Activated B cell treated with CpG ODN at 0.5 μM for 24 hours (primary cell): ENCODE measurements at regions of chr15 and their contacts with region 1.

Region 1: DNA sequence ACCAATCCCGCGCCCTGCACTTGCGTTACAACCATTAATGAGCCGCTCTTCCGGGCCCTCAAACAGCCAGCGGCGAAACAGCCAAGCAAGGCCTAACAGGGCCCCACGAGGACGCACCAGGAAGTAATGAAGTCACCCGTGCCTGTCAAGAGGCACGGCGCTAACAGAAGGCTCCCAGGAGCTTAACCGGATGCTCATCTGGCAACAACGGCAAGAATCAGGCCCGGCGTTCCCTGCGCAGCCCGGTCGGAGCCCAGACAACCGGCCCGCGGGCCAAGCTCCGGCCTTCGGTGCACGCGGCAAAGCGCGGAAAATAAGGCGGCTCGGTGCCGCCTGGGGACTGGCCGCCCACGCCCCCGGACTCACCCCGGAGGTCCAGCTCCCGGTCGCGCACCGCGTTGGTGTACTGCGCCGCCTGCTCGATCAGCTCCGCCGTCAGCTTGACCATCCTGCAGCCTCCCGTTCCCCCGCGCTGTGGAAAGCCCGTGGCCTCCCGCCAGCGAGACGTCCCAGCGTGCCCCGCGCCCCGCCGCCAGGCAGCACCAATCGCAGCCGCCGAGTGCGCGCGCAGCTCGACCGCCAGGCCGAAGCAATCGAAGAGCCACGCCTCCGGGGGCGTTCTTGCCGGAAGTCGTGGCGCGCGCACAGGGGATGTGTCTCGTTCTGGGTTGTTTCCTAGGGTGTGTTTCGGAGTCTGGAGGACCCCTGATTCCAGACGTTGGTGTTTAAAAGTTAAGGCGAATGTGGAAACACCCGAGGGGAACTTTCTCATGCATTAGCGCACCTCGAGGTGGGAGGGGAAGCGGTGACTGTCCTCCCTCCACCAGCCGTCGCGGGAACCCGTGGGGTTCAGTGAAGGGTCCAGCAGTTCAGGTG is at the start of gene SNRPA1:
- DNase-seq: peak; percentile 99
- ATAC-seq: peak; percentile 83
- H3K4me3 Mint-ChIP-seq: peak within 1 kb of the TSS; percentile 97
- H3K27ac Mint-ChIP-seq: peak within 1 kb of the TSS; percentile 95
- H3K4me1 Mint-ChIP-seq: peaks cover 45% of the 10 kb centered on the region
- H3K27me3 Mint-ChIP-seq: no peaks in the 10 kb centered on the region
- CTCF ChIP-seq: no peak
- total RNA-seq, gene SNRPA1: 119 and 122 TPM in 2 replicates

Region 2: DNA sequence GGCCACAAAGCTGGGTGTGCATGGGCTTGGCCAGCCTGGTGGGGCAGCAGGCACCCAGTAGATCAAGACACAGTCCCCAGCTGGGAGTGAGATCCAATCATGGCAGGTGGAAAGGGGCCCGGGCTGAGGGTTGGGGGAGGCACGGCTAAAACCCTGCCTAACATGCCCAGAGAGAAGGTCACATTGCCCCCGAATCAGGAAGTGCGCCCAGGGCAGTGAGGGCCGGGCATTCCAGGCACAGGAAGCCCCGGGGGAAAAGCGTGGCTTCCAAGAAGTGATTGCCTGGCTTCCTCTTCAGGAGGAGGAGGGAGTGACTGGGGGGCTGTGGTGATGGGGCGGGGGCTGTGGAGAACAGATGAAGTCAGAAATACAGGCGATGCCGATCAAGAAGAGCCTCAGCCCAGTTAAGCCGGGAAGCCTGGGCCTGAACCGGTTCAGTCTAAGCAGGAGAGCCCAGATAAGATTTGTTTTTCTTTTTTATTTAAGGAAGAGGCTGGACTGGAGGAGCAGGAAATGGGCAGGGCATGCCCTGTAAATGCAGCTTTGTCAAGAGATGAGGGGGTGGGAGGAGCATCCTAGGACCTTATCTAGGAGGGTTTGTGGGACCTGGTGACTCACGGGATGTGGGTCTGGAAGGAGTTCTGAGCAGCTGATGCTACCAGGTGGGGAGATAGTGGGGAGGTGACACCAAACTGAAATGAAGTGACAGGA is 127.1 kb before region 1 on chr15:
- CTCF ChIA-PET with region 1: no interaction called
- POLR2A ChIA-PET with region 1: no interaction called
- intact Hi-C with region 1: no loop called
- DNase-seq: no peak
- ATAC-seq: peak; percentile 52
- H3K4me3 Mint-ChIP-seq: peak overlapping the region; percentile 69
- H3K27ac Mint-ChIP-seq: peak overlapping the region; percentile 20
- H3K4me1 Mint-ChIP-seq: peaks cover 14% of the 10 kb centered on the region
- H3K27me3 Mint-ChIP-seq: no peaks in the 10 kb centered on the region
- CTCF ChIP-seq: no peak

Region 3: GRCh38 chr15:101277038-101277882 is 17.7 kb before region 1 on chr15 and contains the start of gene SELENOS:
- CTCF ChIA-PET with region 1: interaction called, 3 read pairs
- POLR2A ChIA-PET with region 1: interaction called, 9 read pairs
- intact Hi-C with region 1: loop called (anchors 1 kb)
- DNase-seq: peak; percentile 91
- ATAC-seq: peak; percentile 97
- H3K4me3 Mint-ChIP-seq: peak within 1 kb of the TSS; percentile 90
- H3K27ac Mint-ChIP-seq: peak within 1 kb of the TSS; percentile 70
- H3K4me1 Mint-ChIP-seq: peaks cover 14% of the 10 kb centered on the region
- H3K27me3 Mint-ChIP-seq: no peaks in the 10 kb centered on the region
- CTCF ChIP-seq: no peak
- total RNA-seq, gene SELENOS: 23.7 and 24.5 TPM in 2 replicates

Region 4: DNA sequence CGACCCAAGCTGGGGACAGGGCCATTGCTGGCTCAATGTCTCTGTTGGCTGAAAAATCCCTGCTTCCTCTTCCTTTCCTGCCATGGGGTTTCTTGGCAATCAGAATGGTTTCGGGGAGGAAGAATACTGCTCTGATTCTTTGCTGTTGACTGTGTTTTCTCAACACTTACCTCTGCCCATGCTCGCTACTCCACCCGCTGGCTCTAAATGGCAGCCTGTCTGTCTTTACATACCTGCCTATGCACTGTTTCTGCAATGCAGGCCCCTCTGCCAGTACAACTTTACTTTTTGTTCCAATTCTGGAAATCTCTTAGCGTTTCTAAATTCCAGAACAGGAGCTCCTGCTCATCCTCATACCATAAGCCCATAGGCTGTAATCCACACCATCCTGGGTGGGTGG is 38.4 kb after region 1 on chr15:
- CTCF ChIA-PET with region 1: no interaction called
- POLR2A ChIA-PET with region 1: no interaction called
- intact Hi-C with region 1: loop called (anchors 2 kb)
- DNase-seq: no peak
- ATAC-seq: no peak
- H3K4me3 Mint-ChIP-seq: no peak overlapping the region
- H3K27ac Mint-ChIP-seq: no peak overlapping the region
- H3K4me1 Mint-ChIP-seq: peaks cover 10% of the 10 kb centered on the region
- H3K27me3 Mint-ChIP-seq: peaks cover 7% of the 10 kb centered on the region
- CTCF ChIP-seq: no peak

Region 5: DNA sequence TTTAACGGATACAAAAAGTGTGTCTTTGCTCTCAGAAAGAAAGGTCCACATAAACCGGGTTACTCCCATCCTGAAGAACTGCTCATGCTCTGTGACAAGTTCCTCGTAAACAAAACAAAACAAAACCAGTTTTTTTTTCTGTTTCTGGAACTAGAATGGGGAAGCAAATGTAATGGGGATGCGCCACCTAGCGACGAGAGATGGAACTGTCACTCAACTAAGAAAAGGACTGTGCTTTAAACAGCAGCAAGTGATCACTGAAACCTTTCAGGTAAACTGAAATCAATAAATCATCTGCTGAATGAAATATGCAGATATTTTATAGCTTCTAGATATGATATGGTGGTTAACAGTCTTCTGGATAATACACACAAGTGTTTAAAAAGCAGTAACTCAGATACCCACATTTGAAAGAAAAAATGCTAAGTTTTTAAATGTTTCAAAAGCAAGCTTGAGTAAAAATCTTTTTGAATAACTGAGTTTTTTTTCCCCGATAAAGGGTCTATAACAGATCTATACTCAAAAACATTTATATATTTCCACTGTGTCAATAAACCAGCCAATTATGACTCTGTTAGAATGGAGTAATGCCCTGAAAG is 346.3 kb after region 1 on chr15:
- CTCF ChIA-PET with region 1: interaction called, 42 read pairs
- POLR2A ChIA-PET with region 1: interaction called, 25 read pairs
- intact Hi-C with region 1: loop called (anchors 1 kb)
- DNase-seq: peak; percentile 55
- ATAC-seq: peak; percentile 56
- H3K4me3 Mint-ChIP-seq: no peak overlapping the region
- H3K27ac Mint-ChIP-seq: peak overlapping the region; percentile 76
- H3K4me1 Mint-ChIP-seq: peaks cover 23% of the 10 kb centered on the region
- H3K27me3 Mint-ChIP-seq: no peaks in the 10 kb centered on the region
- CTCF ChIP-seq: peak; percentile 39

Region 6: DNA sequence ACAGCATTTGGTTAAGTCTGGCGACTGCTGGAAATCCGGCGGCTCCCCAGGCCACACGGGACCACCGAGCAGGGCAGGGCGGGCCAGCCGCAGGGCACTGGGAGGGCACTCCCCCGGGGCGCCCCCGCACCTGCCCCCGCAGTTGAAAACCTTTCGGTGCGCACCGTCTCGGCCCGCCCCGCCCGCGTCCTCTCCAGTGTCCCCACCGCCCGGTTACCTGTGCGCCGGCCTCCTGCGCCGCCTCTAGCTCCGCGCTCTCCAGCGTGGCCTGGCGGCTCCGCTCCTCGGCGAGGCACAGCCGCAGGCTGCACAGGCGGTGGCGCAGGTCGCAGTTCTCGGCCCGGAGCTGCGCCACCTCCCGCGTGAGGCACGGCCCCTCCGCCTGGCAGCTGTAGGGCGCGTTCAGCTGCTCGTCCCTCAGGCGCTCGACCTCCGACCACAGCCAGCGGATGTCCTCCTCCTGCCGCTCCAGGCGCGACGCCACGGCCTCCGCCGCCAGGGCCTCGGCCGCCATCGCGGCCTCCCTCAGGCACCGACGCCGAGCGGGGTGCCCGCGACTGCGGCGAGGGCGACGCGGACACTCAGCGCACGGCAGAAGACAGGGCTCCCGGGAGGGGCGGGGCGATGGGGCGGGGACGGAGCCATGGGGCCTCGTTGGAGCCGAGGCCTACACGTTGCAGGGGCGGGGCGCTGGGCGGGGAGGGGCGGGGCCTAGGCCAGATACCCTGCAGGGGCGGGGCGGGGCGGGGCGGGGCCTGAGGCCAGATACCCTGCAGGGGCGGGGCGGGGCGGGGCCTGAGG is 429.1 kb after region 1 on chr15 and contains the start of gene TARS3:
- CTCF ChIA-PET with region 1: no interaction called
- POLR2A ChIA-PET with region 1: interaction called, 7 read pairs
- intact Hi-C with region 1: loop called (anchors 1 kb)
- DNase-seq: peak; percentile 83
- ATAC-seq: peak; percentile 89
- H3K4me3 Mint-ChIP-seq: peak within 1 kb of the TSS; percentile 82
- H3K27ac Mint-ChIP-seq: peak within 1 kb of the TSS; percentile 85
- H3K4me1 Mint-ChIP-seq: peaks cover 15% of the 10 kb centered on the region
- H3K27me3 Mint-ChIP-seq: no peaks in the 10 kb centered on the region
- CTCF ChIP-seq: no peak
- total RNA-seq, gene TARS3: 12.0 and 13.0 TPM in 2 replicates